PC-3 (cell line): ENCODE measurements at regions of chr2 and their contacts with region 1.

Region 1: GRCh38 chr2:11299439-11299838 is 45.0 kb downstream of the ROCK2 start:
- DNase-seq: no peak
- ATAC-seq: no peak
- H3K4me3 ChIP-seq: no peak overlapping the region
- H3K27ac ChIP-seq: no peak overlapping the region
- H3K4me1 ChIP-seq: no peaks in the 10 kb centered on the region
- H3K27me3 ChIP-seq: no peaks in the 10 kb centered on the region
- CTCF ChIP-seq: no peak

Region 2: GRCh38 chr2:11090187-11090586 is 209.3 kb before region 1 on chr2:
- CTCF ChIA-PET with region 1: no interaction called
- POLR2A ChIA-PET with region 1: no interaction called
- intact Hi-C with region 1: no loop called
- DNase-seq: no peak
- ATAC-seq: no peak
- H3K4me3 ChIP-seq: no peak overlapping the region
- H3K27ac ChIP-seq: no peak overlapping the region
- H3K4me1 ChIP-seq: no peaks in the 10 kb centered on the region
- H3K27me3 ChIP-seq: no peaks in the 10 kb centered on the region
- CTCF ChIP-seq: no peak

Region 3: DNA sequence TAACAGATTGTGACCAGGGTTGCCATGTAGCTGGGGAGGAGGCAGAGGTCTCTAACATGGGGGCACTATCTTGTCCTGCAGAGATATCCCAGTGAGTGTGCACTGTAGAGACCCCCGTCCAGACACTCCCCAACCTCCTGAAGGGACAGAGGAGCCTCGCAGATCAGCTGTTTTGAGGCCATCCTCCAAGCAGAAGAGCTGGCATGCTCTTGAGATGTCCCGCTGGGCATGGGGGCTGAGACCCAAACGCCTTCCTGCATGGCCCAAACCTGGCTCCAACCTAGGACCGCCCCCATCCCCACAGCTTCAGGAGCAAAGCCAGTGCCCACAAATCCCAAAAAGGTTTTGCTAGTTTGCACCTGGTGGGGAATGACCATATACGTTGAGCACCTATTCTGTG is 146.8 kb before region 1 on chr2:
- CTCF ChIA-PET with region 1: no interaction called
- POLR2A ChIA-PET with region 1: no interaction called
- intact Hi-C with region 1: no loop called
- DNase-seq: no peak
- ATAC-seq: no peak
- H3K4me3 ChIP-seq: no peak overlapping the region
- H3K27ac ChIP-seq: no peak overlapping the region
- H3K4me1 ChIP-seq: peaks cover 12% of the 10 kb centered on the region
- H3K27me3 ChIP-seq: no peaks in the 10 kb centered on the region
- CTCF ChIP-seq: no peak

Region 4: GRCh38 chr2:11224887-11225286 is 74.6 kb before region 1 on chr2:
- CTCF ChIA-PET with region 1: no interaction called
- POLR2A ChIA-PET with region 1: no interaction called
- intact Hi-C with region 1: no loop called
- DNase-seq: no peak
- ATAC-seq: no peak
- H3K4me3 ChIP-seq: no peak overlapping the region
- H3K27ac ChIP-seq: no peak overlapping the region
- H3K4me1 ChIP-seq: no peaks in the 10 kb centered on the region
- H3K27me3 ChIP-seq: no peaks in the 10 kb centered on the region
- CTCF ChIP-seq: no peak

Region 5: GRCh38 chr2:11329781-11330180 is 30.3 kb after region 1 on chr2:
- CTCF ChIA-PET with region 1: interaction called, 4 read pairs
- POLR2A ChIA-PET with region 1: no interaction called
- intact Hi-C with region 1: loop called (anchors 5 kb)
- DNase-seq: peak; percentile 55
- ATAC-seq: peak; percentile 66
- H3K4me3 ChIP-seq: no peak overlapping the region
- H3K27ac ChIP-seq: no peak overlapping the region
- H3K4me1 ChIP-seq: peaks cover 17% of the 10 kb centered on the region
- H3K27me3 ChIP-seq: no peaks in the 10 kb centered on the region
- CTCF ChIP-seq: no peak

Region 6: DNA sequence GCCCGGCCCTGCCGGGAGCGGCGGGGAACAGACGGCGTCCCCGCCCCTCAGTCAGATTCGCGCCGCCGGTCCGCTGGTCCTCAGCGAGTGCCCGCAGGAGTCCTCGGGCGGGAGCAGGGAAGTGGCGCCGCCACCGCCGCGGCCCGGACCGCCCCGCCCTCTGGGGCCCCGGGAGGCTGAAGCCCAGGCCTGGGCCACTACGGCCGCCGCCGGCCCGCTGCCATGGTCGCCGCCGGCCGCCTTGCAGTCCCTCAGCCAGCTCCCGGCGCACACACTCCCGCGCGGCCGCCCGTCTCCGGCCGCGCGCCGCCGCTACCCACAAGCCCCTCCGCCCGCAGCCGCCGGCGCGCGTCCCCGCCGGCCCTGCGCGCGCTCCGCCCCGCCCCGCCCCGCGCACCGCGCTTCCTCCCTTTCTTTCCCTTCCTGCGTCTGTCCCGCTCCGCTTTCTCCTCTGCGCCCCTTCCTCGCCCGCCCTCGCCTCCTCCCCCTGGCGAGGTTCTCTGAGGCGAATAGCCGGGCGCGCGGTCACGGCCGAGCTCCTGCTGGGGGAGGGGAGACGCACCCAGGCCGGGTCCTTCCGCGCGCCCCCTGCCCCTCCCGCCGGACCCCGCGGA is 45.0 kb after region 1 on chr2 and contains the start of gene ROCK2:
- CTCF ChIA-PET with region 1: no interaction called
- POLR2A ChIA-PET with region 1: no interaction called
- intact Hi-C with region 1: no loop called
- DNase-seq: peak; percentile 80
- ATAC-seq: peak; percentile 53
- H3K4me3 ChIP-seq: peak within 1 kb of the TSS; percentile 95
- H3K27ac ChIP-seq: peak within 1 kb of the TSS; percentile 98
- H3K4me1 ChIP-seq: peaks cover 47% of the 10 kb centered on the region
- H3K27me3 ChIP-seq: no peaks in the 10 kb centered on the region
- CTCF ChIP-seq: no peak
- total RNA-seq, gene ROCK2: 35.3 and 40.7 TPM in 2 replicates